ENCODE measurements at regions of chr22 and their contacts with region 1.

Region 1: GRCh38 chr22:23023294-23023693 is 47.0 kb upstream of the GNAZ start:
- DNase-seq: no peak
- H3K4me3 ChIP-seq: no peak overlapping the region
- H3K27ac ChIP-seq: no peak overlapping the region
- H3K4me1 ChIP-seq: no peaks in the 10 kb centered on the region
- H3K27me3 ChIP-seq: no peaks in the 10 kb centered on the region
- CTCF ChIP-seq: no peak

Region 2: DNA sequence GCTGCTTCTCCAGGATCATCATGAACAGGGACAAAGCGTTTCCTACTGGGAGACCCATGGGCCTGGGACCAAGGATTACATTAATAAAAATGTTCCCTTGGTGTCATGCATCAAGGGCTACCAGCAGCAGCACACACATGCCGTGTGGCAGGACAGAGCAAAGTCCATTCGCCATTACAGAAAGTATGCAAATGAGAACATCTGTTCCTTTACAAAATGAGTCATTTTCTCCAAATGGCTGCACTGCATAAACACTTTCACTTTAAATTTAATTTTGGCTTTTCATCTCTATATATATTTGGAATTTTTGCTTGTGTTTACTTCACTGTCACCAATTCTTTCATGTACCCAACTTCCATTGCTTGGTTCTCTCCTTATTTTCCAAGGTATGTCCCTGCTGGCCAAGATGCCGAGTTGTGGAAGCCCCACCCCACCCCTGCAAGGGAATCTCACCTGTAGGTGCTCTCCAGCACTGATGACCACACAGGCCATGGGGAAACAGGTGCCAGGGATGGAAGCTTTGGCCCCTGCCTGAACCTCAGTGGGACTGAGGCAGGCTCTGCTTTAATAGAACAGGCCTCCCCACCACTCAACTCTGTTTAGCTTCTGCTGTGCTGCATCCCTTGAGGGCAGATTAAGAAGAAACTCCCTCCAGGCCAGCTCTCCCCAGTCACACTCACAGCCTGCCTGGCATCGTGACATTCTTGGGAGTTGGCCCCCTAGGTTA is 31.4 kb after region 1 on chr22:
- CTCF ChIA-PET with region 1: no interaction called
- POLR2A ChIA-PET with region 1: no interaction called
- intact Hi-C with region 1: loop called (anchors 5 kb)
- DNase-seq: no peak
- H3K4me3 ChIP-seq: no peak overlapping the region
- H3K27ac ChIP-seq: no peak overlapping the region
- H3K4me1 ChIP-seq: no peaks in the 10 kb centered on the region
- H3K27me3 ChIP-seq: no peaks in the 10 kb centered on the region
- CTCF ChIP-seq: no peak

Region 3: DNA sequence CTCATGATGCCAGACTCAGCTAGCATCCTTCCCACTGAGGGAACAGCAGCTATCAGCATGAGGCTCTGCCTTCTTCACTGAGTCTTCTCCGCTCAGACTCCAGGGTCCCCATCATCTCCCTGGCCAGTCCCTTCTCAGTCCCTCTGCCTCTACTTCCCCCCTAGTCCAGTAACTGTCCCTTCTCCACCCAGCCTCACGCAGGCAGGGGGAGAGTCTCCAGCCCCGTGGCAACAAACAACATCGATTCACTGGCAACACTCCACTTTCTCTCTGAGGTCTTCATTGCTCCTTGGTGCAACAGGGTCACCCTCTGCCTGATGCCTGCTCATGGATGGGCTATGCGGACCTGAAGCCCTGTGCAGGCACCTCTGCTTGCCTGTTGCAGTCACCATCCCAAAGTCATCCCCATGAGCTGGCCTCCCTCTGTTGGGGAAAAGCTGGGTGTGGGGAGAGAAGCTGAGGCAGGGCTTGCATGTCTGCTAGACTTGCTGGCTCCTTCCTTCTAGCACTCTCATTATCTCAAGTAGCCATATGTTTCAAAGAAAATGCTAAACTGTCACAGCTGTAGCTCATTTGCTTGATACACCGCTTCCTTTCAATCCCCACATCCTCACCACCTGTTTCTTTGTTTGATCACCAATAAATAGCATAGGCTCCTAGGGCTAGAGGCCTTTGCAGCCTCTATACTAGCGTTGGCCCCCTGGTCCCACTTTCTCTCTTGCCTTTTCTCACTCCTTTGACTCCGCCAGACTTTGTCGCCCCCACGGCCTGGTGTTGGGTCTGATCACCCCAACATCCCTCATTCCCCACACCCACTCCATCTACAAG is 152.7 kb after region 1 on chr22:
- CTCF ChIA-PET with region 1: no interaction called
- POLR2A ChIA-PET with region 1: no interaction called
- intact Hi-C with region 1: no loop called
- DNase-seq: no peak
- H3K4me3 ChIP-seq: no peak overlapping the region
- H3K27ac ChIP-seq: no peak overlapping the region
- H3K4me1 ChIP-seq: peaks cover 18% of the 10 kb centered on the region
- H3K27me3 ChIP-seq: no peaks in the 10 kb centered on the region
- CTCF ChIP-seq: no peak

Region 4: DNA sequence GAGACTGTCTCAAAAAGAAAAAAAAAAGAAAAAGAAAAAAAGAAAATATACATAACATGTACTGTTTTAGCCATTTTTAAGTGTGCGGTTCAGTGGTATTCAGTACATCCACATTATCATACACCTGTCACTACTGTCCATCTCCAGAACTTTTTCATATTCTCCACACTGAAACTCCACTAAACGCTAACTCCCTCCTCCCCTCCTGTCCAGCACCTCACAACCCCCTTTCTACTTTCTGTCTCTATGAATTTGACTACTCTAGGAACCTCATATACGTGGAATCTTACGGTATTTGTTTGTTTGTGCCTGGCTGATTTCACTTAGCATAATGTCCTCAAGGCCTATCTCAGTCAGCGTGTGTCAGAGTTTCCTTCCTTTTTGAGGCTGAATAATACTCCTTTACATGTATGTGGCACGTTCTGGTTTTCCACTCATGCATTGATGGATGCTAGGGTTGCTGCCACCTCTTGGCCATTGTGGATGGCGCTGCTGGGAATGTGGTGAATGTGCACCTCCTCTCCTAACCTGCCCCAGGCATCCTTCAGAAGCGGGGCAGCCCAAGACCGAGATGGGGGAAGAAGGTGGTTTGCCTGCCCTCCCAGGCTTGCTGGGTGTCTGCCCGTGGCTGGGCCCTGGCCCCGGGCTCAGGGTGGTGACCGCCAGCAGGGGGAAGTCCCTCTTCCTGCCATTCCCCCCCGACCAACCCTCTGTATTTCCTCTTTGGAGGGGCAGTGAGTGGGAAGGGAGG is 217.5 kb after region 1 on chr22:
- CTCF ChIA-PET with region 1: no interaction called
- POLR2A ChIA-PET with region 1: no interaction called
- intact Hi-C with region 1: no loop called
- DNase-seq: peak; percentile 33
- H3K4me3 ChIP-seq: no peak overlapping the region
- H3K27ac ChIP-seq: peak overlapping the region; percentile 85
- H3K4me1 ChIP-seq: peaks cover 43% of the 10 kb centered on the region
- H3K27me3 ChIP-seq: no peaks in the 10 kb centered on the region
- CTCF ChIP-seq: peak; percentile 54